ENCODE measurements at regions of chr9 and their contacts with region 1.

Region 1: DNA sequence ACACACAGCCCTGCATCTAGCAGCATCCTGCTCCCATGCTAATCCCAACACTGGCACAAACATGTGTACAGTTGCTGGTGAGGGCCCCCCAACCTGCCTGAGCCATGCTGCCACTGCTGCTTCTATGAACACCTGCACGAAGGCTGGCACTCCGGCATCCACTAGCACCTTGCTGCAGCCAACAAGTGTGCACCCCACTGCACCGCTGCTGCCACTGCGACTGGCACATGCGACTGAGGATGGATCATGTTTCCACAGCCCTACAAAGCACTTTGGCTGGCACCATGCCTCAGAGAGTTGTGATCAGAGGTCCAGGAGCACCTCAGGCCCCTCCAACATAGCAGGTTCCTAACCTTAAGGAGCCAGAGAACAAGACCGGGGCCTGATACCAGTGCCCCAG is 7.8 kb upstream of the PDCD1LG2 start:
- DNase-seq: no peak

Region 2: DNA sequence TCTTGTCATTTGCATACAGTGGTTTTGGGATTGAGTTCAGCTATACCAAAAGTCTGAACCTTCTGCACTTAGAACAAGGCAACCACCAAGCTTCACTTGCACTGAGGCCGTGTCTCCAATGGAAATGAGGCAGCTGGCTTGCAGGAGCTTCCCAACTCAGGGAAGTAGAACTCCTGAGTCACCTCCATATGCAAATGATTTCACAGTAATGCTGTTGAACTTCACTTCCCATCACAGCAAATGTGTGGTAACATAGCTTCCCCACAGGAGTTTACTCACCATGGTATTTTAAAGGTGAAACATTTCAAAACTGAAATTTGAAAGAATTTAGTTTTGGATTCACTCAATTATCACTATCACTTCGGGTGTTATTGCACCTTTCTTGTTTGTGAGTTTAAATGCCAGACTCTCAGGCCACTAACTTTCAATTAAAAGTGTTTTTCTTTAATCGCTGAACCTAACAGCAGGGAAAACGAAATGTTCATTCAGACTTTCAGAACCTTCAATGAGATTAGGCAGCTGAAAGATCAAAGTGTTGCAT is 43.2 kb before region 1 on chr9:
- intact Hi-C with region 1: loop called in 1 of 2 experiments (anchors 2 kb)
- DNase-seq: no peak